T-cell (primary cell): ENCODE measurements at regions of chr19 and their contacts with region 1.

Region 1: DNA sequence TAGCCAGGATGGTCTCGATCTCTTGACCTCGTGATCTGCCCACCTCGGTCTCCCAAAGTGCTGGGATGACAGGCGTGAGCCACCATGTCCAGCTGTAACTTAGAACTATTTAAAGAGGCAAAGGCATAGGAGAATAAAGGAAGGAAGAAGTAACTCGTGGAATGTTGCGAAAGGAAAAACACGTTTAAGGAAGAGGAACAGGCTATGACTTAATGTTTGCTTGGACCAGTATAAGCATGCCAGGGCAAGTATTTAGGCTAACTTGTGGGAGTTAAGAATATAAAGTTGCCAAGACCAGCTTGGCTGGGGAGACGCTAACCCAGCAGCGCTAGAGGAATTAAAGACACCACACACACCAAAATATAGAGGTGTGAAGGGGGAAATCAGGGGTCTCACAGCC is 33.5 kb downstream of the ZNF844 start:
- DNase-seq: no peak
- ATAC-seq: no peak
- H3K4me3 ChIP-seq: no peak overlapping the region
- H3K4me3 Mint-ChIP-seq: no peak overlapping the region
- H3K27ac ChIP-seq: no peak overlapping the region
- H3K27ac Mint-ChIP-seq: no peak overlapping the region
- H3K4me1 ChIP-seq: peaks cover 0 to 1% of the 10 kb centered on the region in 2 experiments
- H3K4me1 Mint-ChIP-seq: peaks cover 0 to 2% (median 2%) of the 10 kb centered on the region in 3 donors
- H3K27me3 ChIP-seq: peaks cover 0 to 4% of the 10 kb centered on the region in 2 experiments
- H3K27me3 Mint-ChIP-seq: peaks cover 0 to 8% of the 10 kb centered on the region in 2 donors

Region 2: DNA sequence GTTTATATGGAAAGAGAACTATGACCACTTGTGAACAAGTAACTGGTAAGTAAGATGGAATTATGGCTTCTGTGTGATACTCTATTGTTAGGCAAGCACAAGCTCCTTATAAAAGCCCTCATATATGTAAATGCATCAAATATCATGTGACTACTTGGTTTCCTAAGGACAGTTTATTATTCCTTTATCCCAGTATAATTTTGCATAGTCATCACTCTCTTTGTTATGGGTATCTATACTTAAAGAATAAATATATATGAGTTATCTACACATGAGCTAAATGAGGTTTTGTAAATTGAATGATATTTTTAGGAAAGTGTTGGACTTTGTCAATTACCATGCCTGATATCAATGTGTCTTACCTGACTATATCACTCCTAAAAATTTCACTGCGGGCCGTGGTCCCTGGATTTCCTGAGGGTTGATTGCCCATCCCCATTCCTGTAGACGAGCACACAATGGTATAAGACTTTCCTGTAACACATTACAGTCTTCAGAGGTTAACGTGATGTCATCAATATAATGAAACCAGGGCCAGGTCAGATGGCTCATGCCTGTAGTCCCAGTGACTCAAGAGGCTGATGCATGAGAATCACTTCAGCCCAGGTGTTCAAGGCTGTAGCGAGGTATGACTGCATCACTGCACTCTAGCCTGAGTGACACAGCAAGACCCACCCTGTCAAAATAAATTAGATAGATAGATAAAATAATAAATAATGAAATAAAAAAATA is 12.8 kb before region 1 on chr19:
- CTCF ChIA-PET with region 1: no interaction called
- POLR2A ChIA-PET with region 1: interaction called in 1 of 2 experiments, 11 read pairs
- DNase-seq: no peak
- ATAC-seq: no peak
- H3K4me3 ChIP-seq: no peak overlapping the region
- H3K4me3 Mint-ChIP-seq: no peak overlapping the region
- H3K27ac ChIP-seq: no peak overlapping the region
- H3K27ac Mint-ChIP-seq: no peak overlapping the region
- H3K4me1 ChIP-seq: no peaks in the 10 kb centered on the region
- H3K4me1 Mint-ChIP-seq: no peaks in the 10 kb centered on the region
- H3K27me3 ChIP-seq: no peaks in the 10 kb centered on the region
- H3K27me3 Mint-ChIP-seq: no peaks in the 10 kb centered on the region